ENCODE measurements at regions of chr7 and their contacts with region 1.

Region 1: DNA sequence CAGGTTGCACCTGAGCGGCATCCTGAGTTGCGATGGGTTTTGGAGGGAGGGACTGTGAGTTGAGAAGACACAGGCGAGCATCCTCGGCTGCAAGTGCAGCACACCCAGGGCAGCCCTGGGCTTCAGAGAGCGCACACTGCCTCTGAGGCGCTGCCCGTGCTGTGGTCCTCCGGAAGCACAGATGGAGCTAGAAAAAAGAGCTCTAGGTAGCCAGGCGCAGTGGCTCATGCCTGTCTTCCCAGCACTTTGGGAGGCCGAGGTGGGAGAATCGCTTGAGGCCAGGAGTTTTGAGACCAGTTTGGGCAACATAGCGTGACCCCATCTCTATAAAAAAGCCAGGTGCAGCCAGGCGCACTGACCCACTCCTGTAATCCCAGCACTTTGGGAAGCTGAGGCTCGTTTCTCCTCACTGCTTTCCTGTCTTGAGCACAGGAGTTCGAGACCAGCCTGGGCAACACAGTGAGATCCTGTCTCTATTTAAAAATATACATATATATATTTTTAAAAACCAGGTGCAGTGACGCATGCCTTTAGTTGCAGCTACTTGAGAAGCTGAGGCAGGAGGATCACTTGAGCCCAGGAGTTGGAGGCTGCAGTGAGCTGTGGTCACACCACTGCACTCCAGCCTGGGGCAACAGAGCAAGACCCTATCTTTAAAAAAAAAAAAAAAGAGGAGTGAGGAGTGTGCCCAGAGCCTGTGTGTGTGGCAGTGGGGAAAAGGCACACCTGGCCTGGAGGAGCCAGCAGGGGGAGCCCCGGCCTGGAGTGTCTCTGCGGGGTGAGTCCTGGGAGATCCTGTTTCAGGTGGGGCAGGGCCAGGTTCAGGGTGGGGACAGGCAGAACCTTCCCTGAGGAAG is 9.3 kb upstream of the ARPC1B start:
- DNase-seq: peak; percentile 90
- H3K4me3 Mint-ChIP-seq: no peak overlapping the region
- H3K27ac Mint-ChIP-seq: no peak overlapping the region
- H3K4me1 Mint-ChIP-seq: peaks cover 12% of the 10 kb centered on the region
- H3K27me3 Mint-ChIP-seq: no peaks in the 10 kb centered on the region

Region 2: GRCh38 chr7:99340659-99341058 is 24.5 kb before region 1 on chr7:
- intact Hi-C with region 1: no loop called
- DNase-seq: no peak
- H3K4me3 Mint-ChIP-seq: no peak overlapping the region
- H3K27ac Mint-ChIP-seq: no peak overlapping the region
- H3K4me1 Mint-ChIP-seq: no peaks in the 10 kb centered on the region
- H3K27me3 Mint-ChIP-seq: no peaks in the 10 kb centered on the region

Region 3: DNA sequence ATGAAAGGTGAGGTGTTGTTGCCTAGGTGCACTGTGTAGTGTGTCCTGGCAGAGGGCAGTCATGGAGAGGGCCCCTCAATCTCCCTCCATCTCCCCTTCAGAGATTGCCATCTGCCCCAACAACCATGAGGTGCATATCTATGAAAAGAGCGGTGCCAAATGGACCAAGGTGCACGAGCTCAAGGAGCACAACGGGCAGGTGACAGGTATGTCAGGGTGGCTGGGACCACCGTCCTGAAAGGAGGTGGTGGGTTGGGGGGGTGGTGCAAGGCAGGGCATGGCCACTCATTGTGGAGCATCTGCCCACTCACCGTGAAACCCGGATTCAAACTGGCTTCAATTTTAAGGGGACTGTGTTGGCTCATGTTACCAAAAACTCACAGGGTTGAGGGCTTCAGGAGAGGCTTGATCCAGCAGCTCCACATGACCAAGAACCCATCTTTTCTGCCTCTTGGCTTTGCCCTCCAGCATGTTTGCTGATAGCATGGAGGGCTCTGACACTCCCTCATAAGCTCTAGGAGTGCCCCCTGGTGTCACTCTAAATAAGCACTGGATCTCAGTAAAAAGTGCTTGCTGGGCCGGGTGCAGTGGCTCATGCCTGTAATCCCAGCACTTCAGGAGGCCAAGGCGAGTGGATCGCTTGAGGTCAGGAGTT is 21.5 kb after region 1 on chr7:
- intact Hi-C with region 1: loop called (anchors 2 kb)
- DNase-seq: peak; percentile 81
- H3K4me3 Mint-ChIP-seq: no peak overlapping the region
- H3K27ac Mint-ChIP-seq: no peak overlapping the region
- H3K4me1 Mint-ChIP-seq: peaks cover 12% of the 10 kb centered on the region
- H3K27me3 Mint-ChIP-seq: no peaks in the 10 kb centered on the region

Region 4: GRCh38 chr7:99472561-99473243 is 107.5 kb after region 1 on chr7 and contains the start of gene ZNF789:
- intact Hi-C with region 1: no loop called
- DNase-seq: peak; percentile 99
- H3K4me3 Mint-ChIP-seq: peak within 1 kb of the TSS; percentile 100
- H3K27ac Mint-ChIP-seq: peak within 1 kb of the TSS; percentile 93
- H3K4me1 Mint-ChIP-seq: peaks cover 28% of the 10 kb centered on the region
- H3K27me3 Mint-ChIP-seq: peaks cover 1% of the 10 kb centered on the region
- total RNA-seq, gene ZNF789: 22.6 and 23.6 TPM in 2 replicates